ENCODE measurements at regions of chr6 and their contacts with region 1.

Region 1: GRCh38 chr6:28176373-28176772 is 34.7 kb downstream of the ZKSCAN8 start:
- H3K4me3 ChIP-seq: no peak overlapping the region
- H3K27ac ChIP-seq: no peak overlapping the region
- H3K4me1 ChIP-seq: no peaks in the 10 kb centered on the region
- CTCF ChIP-seq: no peak

Region 2: DNA sequence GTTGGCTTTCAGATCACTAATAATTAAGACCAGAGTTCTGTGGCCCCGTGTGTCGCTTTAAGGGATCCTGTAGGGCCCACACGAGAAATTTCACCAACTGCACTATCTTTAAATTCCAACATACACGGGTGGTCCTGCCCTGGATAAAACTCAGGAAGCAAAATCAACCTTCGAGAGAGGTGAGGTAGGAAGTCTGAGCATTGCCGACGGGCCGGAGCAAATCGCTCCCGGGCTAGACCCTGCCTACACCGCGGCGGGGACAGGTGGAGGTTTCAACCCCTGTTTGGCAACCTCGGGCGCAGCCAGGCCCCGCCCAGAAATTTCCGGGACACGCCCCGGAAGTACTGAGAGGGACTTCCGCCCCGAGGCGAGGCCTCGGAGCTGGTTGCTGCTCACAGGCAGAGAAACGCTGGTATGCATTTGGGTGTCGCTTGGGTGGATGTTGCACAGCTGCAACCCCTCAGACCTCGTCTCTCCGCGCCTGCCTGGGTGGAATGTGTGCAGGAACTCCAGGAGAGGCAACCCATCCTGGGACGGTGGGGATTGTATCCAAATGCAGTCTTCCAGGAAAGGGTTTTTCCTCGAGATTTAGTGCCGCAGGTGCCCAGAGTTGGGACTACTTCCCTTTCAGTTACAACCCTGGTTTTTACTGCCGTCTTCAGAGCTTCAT is 14.8 kb before region 1 on chr6:
- CTCF ChIA-PET with region 1: interaction called, 3 read pairs
- POLR2A ChIA-PET with region 1: interaction called, 11 read pairs
- H3K4me3 ChIP-seq: peak overlapping the region; percentile 50
- H3K27ac ChIP-seq: peak overlapping the region; percentile 63
- H3K4me1 ChIP-seq: peaks cover 3% of the 10 kb centered on the region; the same call in 1 of the 2 replicates
- CTCF ChIP-seq: no peak; the same call in 1 of the 2 replicates

Measured in HEK293 (cell line).